Left ventricle myocardium inferior (tissue), 1 donor: ENCODE measurements at regions of chr7 and their contacts with region 1.

Region 1: GRCh38 chr7:105149827-105150226 is 135.8 kb downstream of the KMT2E start:
- DNase-seq: no peak
- H3K4me3 ChIP-seq: no peak overlapping the region
- H3K27ac ChIP-seq: no peak overlapping the region
- H3K4me1 ChIP-seq: peaks cover 35% of the 10 kb centered on the region
- H3K27me3 ChIP-seq: no peaks in the 10 kb centered on the region
- CTCF ChIP-seq: no peak

Region 2: DNA sequence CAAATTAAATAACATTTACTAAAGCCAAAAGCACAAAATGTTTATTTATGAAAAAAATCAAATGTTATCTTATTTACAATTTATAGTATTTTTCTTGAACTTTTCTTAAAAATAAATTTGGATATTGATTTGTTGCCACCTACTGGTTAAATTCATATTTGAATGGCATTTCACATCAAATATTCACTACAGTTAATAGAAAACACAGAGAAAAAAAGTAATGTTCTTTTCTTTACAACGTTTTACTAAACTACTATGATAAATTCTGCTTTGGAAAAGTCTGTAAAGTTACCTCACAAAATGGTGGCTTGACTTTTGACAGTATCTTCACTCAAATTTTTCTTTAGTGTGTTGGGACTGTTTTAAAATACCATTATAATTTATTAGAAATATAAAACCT is 186.2 kb after region 1 on chr7:
- intact Hi-C with region 1: loop called (anchors 10 kb)
- DNase-seq: no peak
- H3K4me3 ChIP-seq: no peak overlapping the region
- H3K27ac ChIP-seq: no peak overlapping the region
- H3K4me1 ChIP-seq: peaks cover 21% of the 10 kb centered on the region
- H3K27me3 ChIP-seq: no peaks in the 10 kb centered on the region
- CTCF ChIP-seq: peak; percentile 57

Region 3: DNA sequence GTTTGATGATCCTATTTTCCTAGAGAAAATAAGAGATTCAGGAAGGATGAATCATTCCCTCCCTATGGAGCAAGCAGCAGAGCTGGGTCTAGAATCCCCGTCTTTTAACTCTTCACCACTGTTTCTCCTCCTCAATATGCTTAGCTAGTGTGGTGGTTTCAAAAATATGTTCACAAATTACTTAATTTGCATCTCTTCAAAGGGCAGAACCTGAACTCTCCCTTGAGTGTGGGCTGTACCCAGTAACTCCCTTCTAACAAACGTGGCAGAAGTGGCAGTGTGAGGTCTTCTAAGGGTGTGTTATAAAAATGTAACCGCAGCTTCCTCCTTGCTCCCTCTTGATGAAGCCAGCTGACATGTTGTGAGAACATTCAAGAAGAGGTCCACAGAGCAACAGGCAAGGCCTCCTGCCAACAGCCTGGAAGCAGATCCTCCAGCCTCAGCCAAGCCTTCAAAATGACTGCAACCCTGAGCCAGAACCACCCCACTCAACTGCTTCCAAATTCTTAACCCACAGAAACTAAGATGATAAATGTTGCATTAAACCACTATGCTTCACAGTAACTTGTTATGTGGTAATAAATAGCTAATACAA is 202.3 kb after region 1 on chr7:
- intact Hi-C with region 1: no loop called
- DNase-seq: peak; percentile 80
- H3K4me3 ChIP-seq: peak overlapping the region; percentile 16
- H3K27ac ChIP-seq: peak overlapping the region; percentile 73
- H3K4me1 ChIP-seq: peaks cover 46% of the 10 kb centered on the region
- H3K27me3 ChIP-seq: no peaks in the 10 kb centered on the region
- CTCF ChIP-seq: no peak